ENCODE measurements at regions of chr5 and their contacts with region 1.

Region 1: GRCh38 chr5:80069918-80070318 is 34.8 kb downstream of the THBS4 start:
- DNase-seq: peak; percentile 37
- H3K4me3 ChIP-seq: no peak overlapping the region
- H3K27ac ChIP-seq: no peak overlapping the region
- H3K4me1 ChIP-seq: peaks cover 0 to 11% (median 4%) of the 10 kb centered on the region in 4 donors
- H3K27me3 ChIP-seq: no peaks in the 10 kb centered on the region
- CTCF ChIP-seq: no peak
- EP300 ChIP-seq: no peak
- POLR2A ChIP-seq: no peak

Region 2: DNA sequence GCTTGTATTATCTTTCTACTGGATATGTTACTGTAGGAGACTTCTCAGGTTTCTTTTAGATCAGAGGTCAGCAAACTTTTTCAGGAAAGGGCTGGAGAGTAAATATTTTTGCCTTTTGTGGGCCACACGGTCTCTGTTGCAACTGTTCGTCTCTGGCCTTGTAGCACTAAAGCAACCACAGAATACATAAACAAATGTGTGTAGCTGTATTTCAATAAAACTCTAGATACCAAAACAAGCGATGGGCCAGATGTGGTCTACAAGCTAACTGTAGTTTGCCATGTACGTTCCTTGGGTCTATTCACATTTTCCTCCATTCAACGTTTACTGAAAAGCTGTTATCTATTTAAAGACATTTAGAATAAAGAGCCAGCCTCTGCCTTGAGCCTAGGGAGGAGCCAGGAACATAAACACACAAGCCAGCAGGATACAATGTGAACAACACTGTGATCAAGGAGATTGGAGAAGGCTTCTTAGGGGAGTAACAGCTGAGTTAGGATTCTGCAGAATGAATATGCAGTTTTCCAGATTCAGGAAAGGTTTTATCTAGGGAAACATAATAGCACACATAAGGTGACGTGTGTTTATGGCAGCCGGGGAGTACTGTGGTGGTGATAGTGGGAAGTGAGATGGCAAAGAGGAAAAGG is 523.0 kb before region 1 on chr5:
- in situ Hi-C with region 1: loop called in 1 of 4 experiments (anchors 10 kb)
- intact Hi-C with region 1: no loop called
- DNase-seq: no peak
- H3K4me3 ChIP-seq: no peak overlapping the region
- H3K27ac ChIP-seq: no peak overlapping the region
- H3K4me1 ChIP-seq: no peaks in the 10 kb centered on the region
- H3K27me3 ChIP-seq: no peaks in the 10 kb centered on the region
- CTCF ChIP-seq: no peak
- EP300 ChIP-seq: no peak
- POLR2A ChIP-seq: no peak

Region 3: DNA sequence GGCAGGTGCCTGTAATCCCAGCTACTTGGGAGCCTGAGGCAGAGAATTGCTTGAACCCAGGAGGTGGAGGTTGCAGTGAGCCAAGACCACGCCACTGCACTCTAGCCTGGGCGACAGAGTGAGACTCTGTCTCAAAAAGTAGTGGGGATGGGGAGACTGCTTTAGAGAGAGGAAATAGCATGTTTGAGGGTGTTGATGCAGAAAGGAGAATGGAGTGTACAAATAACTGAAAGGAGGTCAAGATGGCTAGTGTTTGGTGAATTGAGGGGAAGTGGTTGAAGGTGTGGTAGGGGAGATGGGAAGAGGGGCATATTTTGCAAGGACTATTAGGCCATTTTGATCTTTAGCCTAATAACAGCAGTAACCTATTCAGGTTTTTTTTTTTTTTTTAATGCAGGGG is 439.5 kb before region 1 on chr5:
- in situ Hi-C with region 1: no loop called
- intact Hi-C with region 1: no loop called
- DNase-seq: no peak
- H3K4me3 ChIP-seq: no peak overlapping the region
- H3K27ac ChIP-seq: no peak overlapping the region
- H3K4me1 ChIP-seq: no peaks in the 10 kb centered on the region
- H3K27me3 ChIP-seq: no peaks in the 10 kb centered on the region
- CTCF ChIP-seq: no peak
- EP300 ChIP-seq: no peak
- POLR2A ChIP-seq: no peak

Region 4: DNA sequence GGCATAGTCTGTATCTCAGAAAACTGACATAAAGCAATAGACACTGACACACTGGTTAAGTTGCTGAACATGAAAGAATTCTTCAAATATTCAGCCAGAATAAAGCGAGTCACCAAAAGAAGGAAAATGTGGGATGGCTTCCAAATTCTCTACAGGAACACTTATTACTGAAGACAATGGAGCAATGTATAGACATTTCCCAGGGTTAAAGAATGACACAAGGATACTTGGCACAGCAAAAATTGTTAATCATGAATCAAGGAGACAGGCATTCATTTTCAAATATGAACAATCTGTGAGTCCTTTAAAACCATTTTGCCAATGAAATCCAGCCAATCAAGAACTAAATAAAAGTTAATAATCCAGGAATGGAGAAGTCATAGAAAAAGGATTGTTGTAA is 171.3 kb before region 1 on chr5:
- in situ Hi-C with region 1: no loop called
- intact Hi-C with region 1: no loop called
- DNase-seq: no peak
- H3K4me3 ChIP-seq: no peak overlapping the region
- H3K27ac ChIP-seq: no peak overlapping the region
- H3K4me1 ChIP-seq: no peaks in the 10 kb centered on the region
- H3K27me3 ChIP-seq: peaks cover 11% of the 10 kb centered on the region
- CTCF ChIP-seq: no peak
- EP300 ChIP-seq: no peak
- POLR2A ChIP-seq: no peak

Region 5: GRCh38 chr5:79922626-79923025 is 147.3 kb before region 1 on chr5:
- in situ Hi-C with region 1: no loop called
- intact Hi-C with region 1: no loop called
- DNase-seq: no peak
- H3K4me3 ChIP-seq: no peak overlapping the region
- H3K27ac ChIP-seq: no peak overlapping the region
- H3K4me1 ChIP-seq: no peaks in the 10 kb centered on the region
- H3K27me3 ChIP-seq: peaks cover 3% of the 10 kb centered on the region
- CTCF ChIP-seq: no peak
- EP300 ChIP-seq: no peak
- POLR2A ChIP-seq: no peak